ENCODE measurements at regions of chr12 and their contacts with region 1.

Region 1: GRCh38 chr12:823028-823698 is 70.8 kb downstream of the WNK1 start:
- DNase-seq: no peak
- ATAC-seq: no peak
- H3K4me3 ChIP-seq: no peak overlapping the region
- H3K27ac ChIP-seq: no peak overlapping the region
- H3K4me1 ChIP-seq: no peaks in the 10 kb centered on the region
- H3K27me3 ChIP-seq: no peaks in the 10 kb centered on the region
- CTCF ChIP-seq: no peak
- EP300 ChIP-seq: no peak
- POLR2A ChIP-seq: no peak
- RAD21 ChIP-seq: no peak

Region 2: GRCh38 chr12:751192-751998 is 71.8 kb before region 1 on chr12:
- CTCF ChIA-PET with region 1: no interaction called
- POLR2A ChIA-PET with region 1: no interaction called
- in situ Hi-C with region 1: no loop called
- intact Hi-C with region 1: loop called (anchors 5 kb)
- DNase-seq: peak; percentile 91
- ATAC-seq: peak; percentile 71
- H3K4me3 ChIP-seq: peak overlapping the region; percentile 65 to 71 (median 67)
- H3K27ac ChIP-seq: peak overlapping the region; percentile 64
- H3K4me1 ChIP-seq: peaks cover 17% of the 10 kb centered on the region
- H3K27me3 ChIP-seq: no peaks in the 10 kb centered on the region; a peak in 1 of 5 replicates
- CTCF ChIP-seq: peak; percentile 97
- EP300 ChIP-seq: peak in 1 of 2 experiments; percentile 34; a peak in 2 of 4 replicates
- POLR2A ChIP-seq: peak; percentile 61 to 68
- RAD21 ChIP-seq: peak; percentile 94

Region 3: GRCh38 chr12:949453-950191 is 126.5 kb after region 1 on chr12 and contains the start of gene RAD52:
- CTCF ChIA-PET with region 1: no interaction called
- POLR2A ChIA-PET with region 1: no interaction called
- in situ Hi-C with region 1: no loop called
- intact Hi-C with region 1: loop called (anchors 5 kb)
- DNase-seq: peak; percentile 96
- ATAC-seq: peak; percentile 92
- H3K4me3 ChIP-seq: peak within 1 kb of the TSS; percentile 78 to 85 (median 78)
- H3K27ac ChIP-seq: peak within 1 kb of the TSS; percentile 82
- H3K4me1 ChIP-seq: peaks cover 52% of the 10 kb centered on the region
- H3K27me3 ChIP-seq: no peaks in the 10 kb centered on the region; a peak in 1 of 5 replicates
- CTCF ChIP-seq: peak; percentile 99
- EP300 ChIP-seq: peak in 1 of 2 experiments; percentile 45; a peak in 2 of 4 replicates
- POLR2A ChIP-seq: peak; percentile 65 to 91; a peak in 3 of 4 replicates
- RAD21 ChIP-seq: peak; percentile 94
- total RNA-seq, gene RAD52: 13.5 and 19.9 TPM in 2 replicates

Region 4: GRCh38 chr12:1093166-1093751 is 270.1 kb after region 1 on chr12:
- CTCF ChIA-PET with region 1: no interaction called
- POLR2A ChIA-PET with region 1: interaction called, 3 read pairs
- in situ Hi-C with region 1: no loop called
- intact Hi-C with region 1: loop called (anchors 5 kb)
- DNase-seq: peak; percentile 71
- ATAC-seq: peak; percentile 88
- H3K4me3 ChIP-seq: no peak overlapping the region
- H3K27ac ChIP-seq: no peak overlapping the region
- H3K4me1 ChIP-seq: peaks cover 8% of the 10 kb centered on the region; the same call in 1 of the 2 replicates
- H3K27me3 ChIP-seq: no peaks in the 10 kb centered on the region
- CTCF ChIP-seq: peak; percentile 74
- EP300 ChIP-seq: no peak
- POLR2A ChIP-seq: no peak
- RAD21 ChIP-seq: peak; percentile 48; the same call in 1 of the 2 replicates

Measured in HepG2 (cell line).